Posterior vena cava (tissue), 2 donors: ENCODE measurements at regions of chr14 and their contacts with region 1.

Region 1: GRCh38 chr14:63174760-63175211 is 29.5 kb upstream of the RHOJ start:
- DNase-seq: no peak

Region 2: DNA sequence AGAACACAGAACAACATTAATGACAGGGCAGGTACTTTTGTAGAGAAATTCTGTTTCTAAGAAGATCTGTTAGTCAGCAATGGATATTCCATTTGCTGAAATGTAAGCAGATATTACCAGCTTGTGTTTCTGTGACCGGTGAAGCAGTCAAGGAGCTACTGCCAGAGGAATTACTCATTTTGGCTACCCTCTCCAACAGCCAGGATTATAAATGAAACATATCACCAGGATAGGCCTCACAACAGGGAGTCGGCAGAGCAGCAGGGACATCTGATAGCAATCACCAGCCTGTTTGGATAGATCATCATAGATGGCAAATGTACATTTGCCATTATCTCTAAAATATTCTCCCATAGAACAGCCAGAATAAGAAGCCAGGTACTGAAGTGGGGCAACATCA is 570.3 kb before region 1 on chr14:
- intact Hi-C with region 1: no loop called
- DNase-seq: no peak

Region 3: GRCh38 chr14:63224196-63224595 is 49.4 kb after region 1 on chr14:
- intact Hi-C with region 1: loop called in 1 of 2 experiments (anchors 1 kb)
- DNase-seq: no peak

Region 4: DNA sequence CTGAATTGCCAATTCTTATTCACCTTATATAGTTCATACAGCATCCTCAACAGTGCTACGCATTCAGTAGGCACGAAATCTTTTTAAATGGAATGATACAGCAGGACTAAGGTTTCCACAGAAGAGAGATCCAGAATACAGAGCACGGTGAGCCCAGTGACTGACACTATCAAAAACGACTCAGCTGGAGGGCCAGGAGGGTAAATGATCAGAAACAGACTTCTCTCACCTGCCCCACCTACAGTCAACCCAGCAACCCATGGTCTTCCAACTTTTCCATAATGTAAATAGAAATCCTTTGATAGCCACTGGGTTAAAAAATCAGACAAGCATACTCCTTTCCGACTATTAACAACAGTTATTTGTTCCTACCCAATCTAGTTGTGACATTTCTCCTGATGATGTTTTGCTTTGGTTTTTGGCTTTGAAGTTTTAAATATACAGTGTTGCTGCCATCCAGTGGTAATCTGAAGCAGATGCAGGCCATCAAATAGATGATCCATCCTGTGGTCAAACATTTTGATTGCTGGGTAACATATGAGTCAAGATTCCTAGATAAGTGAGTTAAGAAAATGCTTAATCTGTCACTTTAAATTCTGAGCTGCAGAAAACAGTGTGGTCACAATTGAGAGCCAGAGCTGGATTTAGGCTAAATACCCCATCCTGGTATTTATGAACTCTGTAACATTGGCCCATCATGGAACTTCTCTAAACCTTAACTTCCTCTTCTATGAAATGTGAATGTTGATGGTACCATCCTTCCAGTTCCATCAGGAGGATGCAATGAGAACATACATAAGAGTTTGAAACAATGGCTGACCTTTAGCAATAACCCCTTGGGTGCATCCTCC is 101.9 kb after region 1 on chr14:
- intact Hi-C with region 1: loop called (anchors 5 to 10 kb)
- DNase-seq: no peak